Heart right ventricle (tissue), 16 donors: ENCODE measurements at regions of chr3 and their contacts with region 1.

Region 1: DNA sequence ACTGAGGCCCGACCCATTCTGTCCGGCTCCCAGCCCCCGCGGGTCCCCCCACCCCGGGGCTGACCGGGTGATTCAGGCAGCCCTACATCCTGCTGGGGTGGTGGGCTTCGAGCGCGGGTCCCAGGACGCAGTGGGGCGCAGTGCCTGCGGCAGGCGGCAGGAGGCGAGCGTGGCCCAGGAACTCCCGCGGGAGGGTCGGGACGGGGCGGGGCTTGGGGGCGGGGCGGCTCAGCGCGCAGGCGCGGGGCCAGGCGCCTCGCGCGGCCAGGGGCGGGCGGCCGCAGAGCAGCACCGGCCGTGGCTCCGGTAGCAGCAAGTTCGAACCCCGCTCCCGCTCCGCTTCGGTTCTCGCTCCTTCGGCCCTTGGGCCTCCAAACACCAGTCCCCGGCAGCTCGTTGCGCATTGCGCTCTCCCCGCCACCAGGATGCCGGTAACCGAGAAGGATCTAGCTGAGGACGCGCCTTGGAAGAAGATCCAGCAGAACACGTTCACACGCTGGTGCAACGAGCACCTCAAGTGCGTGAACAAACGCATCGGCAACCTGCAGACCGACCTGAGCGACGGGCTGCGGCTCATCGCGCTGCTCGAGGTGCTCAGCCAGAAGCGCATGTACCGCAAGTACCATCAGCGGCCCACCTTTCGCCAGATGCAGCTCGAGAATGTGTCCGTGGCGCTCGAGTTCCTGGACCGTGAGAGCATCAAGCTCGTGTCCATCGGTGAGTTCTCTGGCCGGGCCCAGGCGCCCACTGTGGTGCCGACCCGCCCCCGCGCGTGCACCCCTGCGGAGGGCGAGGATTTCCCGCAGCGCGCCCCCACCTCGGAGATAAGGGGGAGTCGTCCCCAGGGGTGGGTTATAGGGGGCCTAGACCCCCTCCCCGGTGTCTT is at the start of gene FLNB:
- DNase-seq: peak; percentile 57 to 81
- ATAC-seq: peak; percentile 87 to 95 (median 90)
- H3K4me3 ChIP-seq: peak within 1 kb of the TSS; percentile 62 to 99 (median 92)
- H3K27ac ChIP-seq: peak within 1 kb of the TSS; percentile 42 to 88 (median 81)
- H3K4me1 ChIP-seq: peaks cover 0 to 50% (median 39%) of the 10 kb centered on the region in 9 donors
- H3K27me3 ChIP-seq: no peaks in the 10 kb centered on the region
- CTCF ChIP-seq: peak; percentile 58 to 82 (median 75)
- total RNA-seq, gene FLNB: 27.4 to 61.8 (median 38.6) TPM

Region 2: DNA sequence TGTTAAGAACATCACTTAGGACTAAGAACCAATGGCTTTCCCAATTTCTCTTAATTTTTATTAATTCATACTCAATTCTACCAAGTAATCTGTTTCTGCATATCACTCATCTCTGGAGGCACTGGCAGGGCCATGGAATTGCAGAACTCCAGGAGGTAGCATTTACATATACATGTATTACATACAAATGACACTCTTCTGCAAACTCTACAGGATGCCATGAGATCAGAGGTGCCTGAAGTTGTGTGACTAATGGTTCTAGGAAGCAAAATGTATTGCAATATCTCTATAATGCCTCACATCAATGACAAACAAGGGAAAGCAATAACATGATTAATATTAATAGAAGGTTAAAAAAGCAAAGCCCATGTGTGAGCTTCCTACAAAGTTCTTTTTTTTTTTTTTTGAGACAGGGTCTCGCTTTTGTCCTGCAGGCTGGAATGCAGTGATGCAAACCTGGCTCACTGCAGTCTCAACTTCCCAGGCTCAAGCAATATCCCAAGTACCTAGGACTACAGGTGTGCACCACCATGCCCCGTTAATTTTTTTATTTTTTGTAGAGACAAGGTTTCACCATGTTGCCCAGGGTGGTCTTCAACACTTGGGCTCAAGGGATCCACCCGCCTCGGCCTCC is 348.5 kb before region 1 on chr3:
- intact Hi-C with region 1: no loop called
- DNase-seq: no peak
- ATAC-seq: no peak
- H3K4me3 ChIP-seq: no peak overlapping the region
- H3K27ac ChIP-seq: peak overlapping the region in 4 of 10 donors; percentile 45 to 69 (median 62)
- H3K4me1 ChIP-seq: peaks cover 0 to 24% (median 14%) of the 10 kb centered on the region in 9 donors
- H3K27me3 ChIP-seq: no peaks in the 10 kb centered on the region
- CTCF ChIP-seq: no peak

Region 3: GRCh38 chr3:57682284-57682683 is 326.1 kb before region 1 on chr3:
- intact Hi-C with region 1: no loop called
- DNase-seq: no peak
- ATAC-seq: no peak
- H3K4me3 ChIP-seq: no peak overlapping the region
- H3K27ac ChIP-seq: no peak overlapping the region
- H3K4me1 ChIP-seq: peaks cover 0 to 60% (median 29%) of the 10 kb centered on the region in 9 donors
- H3K27me3 ChIP-seq: no peaks in the 10 kb centered on the region
- CTCF ChIP-seq: peak in 1 of 9 donors; percentile 14

Region 4: GRCh38 chr3:57803647-57804081 is 204.7 kb before region 1 on chr3:
- intact Hi-C with region 1: no loop called
- DNase-seq: peak in 1 of 2 donors; percentile 32
- ATAC-seq: peak; percentile 73 to 87 (median 82)
- H3K4me3 ChIP-seq: peak overlapping the region in 1 of 10 donors; percentile 2
- H3K27ac ChIP-seq: peak overlapping the region in 5 of 10 donors; percentile 0 to 45 (median 25)
- H3K4me1 ChIP-seq: peaks cover 0 to 53% (median 48%) of the 10 kb centered on the region in 9 donors
- H3K27me3 ChIP-seq: no peaks in the 10 kb centered on the region
- CTCF ChIP-seq: no peak

Region 5: GRCh38 chr3:57951066-57951882 is 57.1 kb before region 1 on chr3:
- intact Hi-C with region 1: loop called in 2 of 10 experiments (anchors 5 to 10 kb)
- DNase-seq: peak; percentile 64 to 85
- ATAC-seq: peak; percentile 90 to 96 (median 95)
- H3K4me3 ChIP-seq: no peak overlapping the region
- H3K27ac ChIP-seq: peak overlapping the region; percentile 79 to 97 (median 93)
- H3K4me1 ChIP-seq: peaks cover 3 to 51% (median 42%) of the 10 kb centered on the region in 9 donors
- H3K27me3 ChIP-seq: no peaks in the 10 kb centered on the region
- CTCF ChIP-seq: no peak

Region 6: GRCh38 chr3:58116161-58116955 is 108.0 kb after region 1 on chr3:
- intact Hi-C with region 1: loop called in 3 of 10 experiments (anchors 5 to 10 kb)
- DNase-seq: no peak
- ATAC-seq: no peak
- H3K4me3 ChIP-seq: no peak overlapping the region
- H3K27ac ChIP-seq: peak overlapping the region in 3 of 10 donors; percentile 16 to 51 (median 40)
- H3K4me1 ChIP-seq: peaks cover 18 to 56% (median 47%) of the 10 kb centered on the region in 9 donors
- H3K27me3 ChIP-seq: no peaks in the 10 kb centered on the region
- CTCF ChIP-seq: no peak

Region 7: DNA sequence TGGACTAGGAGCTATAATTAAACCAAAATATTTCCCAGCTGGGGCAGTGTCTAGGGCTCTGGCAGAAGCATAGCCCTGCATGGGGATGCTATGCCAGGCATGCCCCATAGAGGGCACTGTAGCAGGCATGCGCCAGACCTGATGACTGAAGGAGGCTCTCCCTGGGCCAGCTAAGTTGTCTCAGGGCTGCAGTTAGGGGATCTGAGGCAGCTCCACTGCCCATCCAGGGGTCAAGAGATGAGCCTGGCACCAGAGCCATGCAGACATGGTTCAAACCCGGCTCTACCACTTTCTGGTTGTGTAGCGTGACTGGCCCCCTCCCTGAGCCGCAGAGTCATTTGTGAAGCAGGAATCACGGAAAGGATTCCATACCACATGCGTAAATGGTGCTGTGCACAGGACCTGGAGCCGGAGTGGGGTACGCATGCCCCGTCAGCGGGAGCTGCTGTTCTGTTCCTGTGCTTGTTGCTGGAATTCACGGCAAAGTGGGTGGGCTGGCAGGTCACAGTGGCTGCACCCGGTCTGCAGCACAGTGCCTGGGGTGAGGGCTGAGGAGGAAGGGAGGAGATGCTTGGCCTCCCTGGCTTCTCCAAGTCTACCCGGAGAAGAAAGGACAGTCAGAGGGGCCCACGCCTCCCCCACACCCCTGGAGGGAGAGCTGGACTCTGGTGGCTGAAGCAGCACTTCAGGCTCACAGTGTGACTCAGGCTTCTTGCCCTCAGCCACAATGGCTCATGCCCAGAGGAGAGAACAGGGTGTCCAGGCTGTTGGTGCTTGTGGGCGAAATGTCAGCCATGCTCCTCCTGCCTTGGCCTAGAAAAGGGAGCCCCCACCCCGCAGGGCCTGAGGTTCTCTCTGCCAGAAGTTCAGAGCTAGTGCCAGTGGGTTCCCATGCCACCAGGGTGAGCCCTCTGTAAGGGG is 159.3 kb after region 1 on chr3:
- intact Hi-C with region 1: loop called in 9 of 10 experiments (anchors 2 to 5 kb)
- DNase-seq: peak; percentile 72 to 79
- ATAC-seq: peak; percentile 70 to 84 (median 81)
- H3K4me3 ChIP-seq: no peak overlapping the region
- H3K27ac ChIP-seq: peak overlapping the region; percentile 28 to 91 (median 72)
- H3K4me1 ChIP-seq: peaks cover 7 to 55% (median 32%) of the 10 kb centered on the region in 9 donors
- H3K27me3 ChIP-seq: no peaks in the 10 kb centered on the region
- CTCF ChIP-seq: peak; percentile 64 to 94 (median 88)

Region 8: GRCh38 chr3:58305882-58306711 is 297.7 kb after region 1 on chr3 and contains the starts of genes HTD2 and RPP14:
- intact Hi-C with region 1: loop called in 1 of 10 experiments (anchors 10 kb)
- DNase-seq: peak; percentile 98 to 99
- ATAC-seq: peak; percentile 95 to 98 (median 96)
- H3K4me3 ChIP-seq: peak within 1 kb of the TSS; percentile 73 to 93 (median 87)
- H3K27ac ChIP-seq: peak within 1 kb of the TSS; percentile 95 to 99 (median 97)
- H3K4me1 ChIP-seq: peaks cover 0 to 40% (median 32%) of the 10 kb centered on the region in 9 donors
- H3K27me3 ChIP-seq: no peaks in the 10 kb centered on the region
- CTCF ChIP-seq: peak; percentile 94 to 99 (median 98)
- total RNA-seq, gene HTD2: 11.2 to 19.5 (median 13.1) TPM
- total RNA-seq, gene RPP14: 19.9 to 34.4 (median 24.3) TPM

Region 9: GRCh38 chr3:58962816-58963215 is 954.4 kb after region 1 on chr3:
- intact Hi-C with region 1: no loop called
- DNase-seq: no peak
- ATAC-seq: no peak
- H3K4me3 ChIP-seq: no peak overlapping the region
- H3K27ac ChIP-seq: no peak overlapping the region
- H3K4me1 ChIP-seq: peaks cover 0 to 4% (median 0%) of the 10 kb centered on the region in 9 donors
- H3K27me3 ChIP-seq: no peaks in the 10 kb centered on the region
- CTCF ChIP-seq: no peak